ENCODE measurements at regions of chr14 and their contacts with region 1.

Region 1: GRCh38 chr14:55354500-55354899 is 57.1 kb downstream of the ATG14 start:
- DNase-seq: peak; percentile 76
- H3K4me3 Mint-ChIP-seq: no peak overlapping the region
- H3K27ac Mint-ChIP-seq: peak overlapping the region; percentile 88
- H3K4me1 Mint-ChIP-seq: peaks cover 25% of the 10 kb centered on the region
- H3K27me3 Mint-ChIP-seq: no peaks in the 10 kb centered on the region

Region 2: GRCh38 chr14:55212634-55213033 is 141.9 kb before region 1 on chr14:
- CTCF ChIA-PET with region 1: interaction called, 35 read pairs
- DNase-seq: no peak
- H3K4me3 Mint-ChIP-seq: no peak overlapping the region
- H3K27ac Mint-ChIP-seq: no peak overlapping the region
- H3K4me1 Mint-ChIP-seq: peaks cover 4% of the 10 kb centered on the region
- H3K27me3 Mint-ChIP-seq: peaks cover 11% of the 10 kb centered on the region

Region 3: GRCh38 chr14:55256586-55256985 is 97.9 kb before region 1 on chr14:
- CTCF ChIA-PET with region 1: interaction called, 11 read pairs
- DNase-seq: no peak
- H3K4me3 Mint-ChIP-seq: no peak overlapping the region
- H3K27ac Mint-ChIP-seq: no peak overlapping the region
- H3K4me1 Mint-ChIP-seq: no peaks in the 10 kb centered on the region
- H3K27me3 Mint-ChIP-seq: peaks cover 36% of the 10 kb centered on the region

Region 4: GRCh38 chr14:55277972-55278740 is 76.3 kb before region 1 on chr14:
- CTCF ChIA-PET with region 1: interaction called, 139 read pairs
- DNase-seq: peak; percentile 28
- H3K4me3 Mint-ChIP-seq: peak overlapping the region; percentile 15
- H3K27ac Mint-ChIP-seq: peak overlapping the region; percentile 87
- H3K4me1 Mint-ChIP-seq: peaks cover 54% of the 10 kb centered on the region
- H3K27me3 Mint-ChIP-seq: no peaks in the 10 kb centered on the region

Region 5: GRCh38 chr14:55372825-55373224 is 18.3 kb after region 1 on chr14:
- CTCF ChIA-PET with region 1: interaction called, 11 read pairs
- DNase-seq: no peak
- H3K4me3 Mint-ChIP-seq: no peak overlapping the region
- H3K27ac Mint-ChIP-seq: peak overlapping the region; percentile 42
- H3K4me1 Mint-ChIP-seq: peaks cover 38% of the 10 kb centered on the region
- H3K27me3 Mint-ChIP-seq: no peaks in the 10 kb centered on the region

Measured in activated naive CD4-positive, alpha-beta T cell treated with anti-CD3 and anti-CD28 coated beads, Interleukin-2, amount 10 ng/mL, durations not matched to agents 7 days and 5 days (primary cell).